SK-N-SH (cell line): ENCODE measurements at regions of chr1 and their contacts with region 1.

Region 1: DNA sequence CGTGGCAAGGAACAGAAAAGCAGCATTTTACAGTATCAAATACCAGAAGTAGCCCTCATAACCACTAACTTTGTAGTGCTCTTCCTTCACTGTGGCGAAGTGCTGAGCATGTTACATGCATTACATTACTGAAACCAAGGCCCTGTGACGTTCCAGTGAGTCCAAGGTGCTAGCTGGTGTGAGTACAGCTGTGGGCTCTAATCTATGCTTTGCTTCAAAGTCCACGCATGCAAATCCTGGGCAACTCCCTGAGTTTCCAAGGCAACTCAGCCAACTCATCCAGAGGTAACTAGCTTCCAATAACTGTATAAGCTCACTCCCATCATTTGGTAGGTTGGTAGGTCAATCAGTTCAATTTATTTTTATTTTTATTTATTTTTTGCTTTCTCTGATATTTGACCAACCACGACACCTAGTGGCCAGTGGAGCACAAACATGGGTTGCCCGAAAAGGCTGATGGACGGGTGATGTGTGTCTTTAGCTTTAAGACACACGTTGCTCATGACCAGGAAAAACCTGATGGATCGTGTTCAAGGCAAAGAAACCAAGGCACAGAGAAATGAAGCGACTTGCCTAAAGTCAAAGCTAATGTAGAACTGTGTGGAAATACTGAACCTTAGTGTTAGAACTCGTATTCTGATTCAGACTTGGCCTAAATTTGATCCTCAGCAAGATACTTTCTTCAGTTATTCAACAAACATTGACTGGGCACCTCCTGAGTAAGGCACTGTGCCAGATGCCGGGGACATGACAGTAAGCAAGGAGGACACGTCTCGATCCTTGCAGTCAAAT is 73.0 kb downstream of the GNG12 start:
- DNase-seq: peak; percentile 56
- H3K4me3 ChIP-seq: peak overlapping the region in 1 of 2 experiments; percentile 4; a peak in 1 of 4 replicates
- H3K27ac ChIP-seq: peak overlapping the region; percentile 51 to 74; a peak in 3 of 4 replicates
- H3K4me1 ChIP-seq: peaks cover 5 to 10% of the 10 kb centered on the region in 2 experiments; a peak in 3 of 4 replicates
- H3K27me3 ChIP-seq: no peaks in the 10 kb centered on the region
- CTCF ChIP-seq: peak; percentile 94
- EP300 ChIP-seq: no peak
- RAD21 ChIP-seq: peak; percentile 87

Region 2: DNA sequence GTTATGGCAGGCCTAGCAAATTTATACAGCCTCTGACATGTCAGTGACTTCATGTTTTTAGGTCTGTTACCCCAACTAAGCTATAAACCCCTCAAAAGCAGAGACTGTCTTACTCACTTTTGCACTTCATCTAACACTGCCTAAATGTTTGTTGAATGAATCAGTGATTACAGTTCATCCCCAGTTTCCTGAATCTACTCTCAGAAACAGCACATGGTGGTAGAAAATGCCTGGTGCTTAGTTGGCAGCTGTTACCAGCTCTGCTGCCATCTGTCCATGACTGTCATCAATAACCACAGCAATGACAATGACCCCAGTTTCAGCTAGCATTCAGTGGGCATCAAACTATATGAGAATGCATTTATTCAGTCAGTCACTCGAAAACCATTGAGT is 219.5 kb before region 1 on chr1:
- CTCF ChIA-PET with region 1: interaction called, 284 read pairs
- POLR2A ChIA-PET with region 1: no interaction called
- DNase-seq: no peak
- H3K4me3 ChIP-seq: no peak overlapping the region
- H3K27ac ChIP-seq: no peak overlapping the region
- H3K4me1 ChIP-seq: no peaks in the 10 kb centered on the region; a peak in 1 of 4 replicates
- H3K27me3 ChIP-seq: no peaks in the 10 kb centered on the region
- CTCF ChIP-seq: no peak
- EP300 ChIP-seq: no peak
- RAD21 ChIP-seq: no peak

Region 3: DNA sequence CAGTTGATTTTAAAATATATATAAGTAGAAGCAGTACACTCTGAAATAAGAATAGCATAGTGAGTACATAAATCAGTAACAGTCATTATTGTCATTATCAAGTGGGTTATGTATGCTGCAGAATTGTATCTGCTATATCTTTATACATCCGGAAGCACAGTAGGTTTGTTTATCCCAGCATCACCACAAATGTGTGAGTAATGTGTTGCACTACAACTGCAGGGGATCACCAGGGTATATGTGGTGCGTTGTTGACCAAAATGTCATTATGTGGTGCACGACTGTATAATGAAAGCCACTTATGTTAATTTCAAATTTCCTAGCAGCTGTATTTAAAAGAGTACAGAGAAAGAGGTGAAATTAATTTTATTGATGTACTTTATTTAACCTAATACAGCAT is 162.9 kb before region 1 on chr1:
- CTCF ChIA-PET with region 1: no interaction called
- POLR2A ChIA-PET with region 1: no interaction called
- DNase-seq: no peak
- H3K4me3 ChIP-seq: no peak overlapping the region
- H3K27ac ChIP-seq: no peak overlapping the region
- H3K4me1 ChIP-seq: peaks cover 0 to 2% of the 10 kb centered on the region in 2 experiments; a peak in 1 of 4 replicates
- H3K27me3 ChIP-seq: no peaks in the 10 kb centered on the region
- CTCF ChIP-seq: no peak
- EP300 ChIP-seq: no peak
- RAD21 ChIP-seq: no peak

Region 4: DNA sequence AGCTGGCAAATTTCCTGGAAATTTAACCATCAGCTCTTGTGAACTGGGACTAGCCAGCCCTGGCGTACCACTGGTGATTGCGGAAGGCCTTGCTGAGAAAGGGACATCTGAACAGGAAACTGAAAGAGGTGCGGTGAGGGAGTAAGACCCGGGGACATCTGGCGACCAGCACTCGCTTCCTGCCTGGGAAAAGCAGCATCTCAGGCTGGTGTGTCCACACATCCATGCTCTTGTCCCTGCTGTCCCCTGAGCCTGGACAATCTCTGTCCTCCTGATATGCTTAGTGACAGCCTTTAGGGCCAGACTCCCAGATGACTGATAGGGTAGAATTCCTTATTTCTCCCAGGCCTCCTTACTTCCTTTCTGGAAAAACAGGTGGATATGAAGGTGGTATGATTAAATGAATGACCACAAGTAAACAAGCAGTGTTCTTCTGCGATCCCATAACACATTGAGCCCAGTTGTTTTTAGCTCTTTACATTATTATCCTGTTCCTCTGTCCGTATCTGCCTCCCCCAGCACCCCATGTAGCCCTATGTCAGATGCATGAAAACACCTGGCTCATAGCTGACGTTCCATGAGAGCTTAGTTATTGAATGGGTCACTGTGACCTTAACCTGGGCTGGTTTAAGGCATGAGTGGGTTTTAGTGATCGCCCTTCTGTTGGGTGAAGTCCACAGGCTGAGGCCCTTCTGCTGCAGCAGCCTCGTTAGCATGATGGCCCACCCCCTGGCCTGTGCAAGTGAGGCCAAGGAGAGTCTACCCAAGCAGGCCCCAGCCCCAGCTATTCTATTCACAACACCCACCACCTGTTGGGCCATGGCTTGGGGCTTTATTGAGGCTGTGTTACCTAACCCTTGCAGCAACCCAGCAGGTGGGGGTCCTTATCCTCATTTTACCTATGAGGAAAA is 151.3 kb before region 1 on chr1:
- CTCF ChIA-PET with region 1: interaction called, 10 read pairs
- POLR2A ChIA-PET with region 1: no interaction called
- DNase-seq: peak; percentile 78
- H3K4me3 ChIP-seq: no peak overlapping the region
- H3K27ac ChIP-seq: peak overlapping the region in 1 of 2 experiments; percentile 95; a peak in 2 of 4 replicates
- H3K4me1 ChIP-seq: peaks cover 0 to 50% of the 10 kb centered on the region in 2 experiments; a peak in 2 of 4 replicates
- H3K27me3 ChIP-seq: no peaks in the 10 kb centered on the region
- CTCF ChIP-seq: no peak
- EP300 ChIP-seq: peak in 1 of 2 experiments; percentile 87; a peak in 1 of 4 replicates
- RAD21 ChIP-seq: no peak

Region 5: GRCh38 chr1:67685067-67685557 is 75.1 kb before region 1 on chr1 and contains the start of gene GADD45A:
- CTCF ChIA-PET with region 1: interaction called, 100 read pairs
- POLR2A ChIA-PET with region 1: interaction called, 8 read pairs
- DNase-seq: peak; percentile 95
- H3K4me3 ChIP-seq: peak within 1 kb of the TSS; percentile 87 to 98
- H3K27ac ChIP-seq: peak within 1 kb of the TSS; percentile 96 to 99
- H3K4me1 ChIP-seq: peaks cover 15 to 28% of the 10 kb centered on the region in 2 experiments; a peak in 3 of 4 replicates
- H3K27me3 ChIP-seq: no peaks in the 10 kb centered on the region
- CTCF ChIP-seq: no peak
- EP300 ChIP-seq: no peak; a peak in 1 of 4 replicates
- RAD21 ChIP-seq: no peak
- polyA plus RNA-seq, gene GADD45A: 106 and 164 TPM in 2 replicates

Region 6: GRCh38 chr1:67732750-67733151 is 27.5 kb before region 1 on chr1:
- CTCF ChIA-PET with region 1: interaction called, 18 read pairs
- POLR2A ChIA-PET with region 1: no interaction called
- DNase-seq: no peak
- H3K4me3 ChIP-seq: no peak overlapping the region
- H3K27ac ChIP-seq: peak overlapping the region in 1 of 2 experiments; percentile 59; a peak in 2 of 4 replicates
- H3K4me1 ChIP-seq: peaks cover 15 to 41% of the 10 kb centered on the region in 2 experiments; a peak in 3 of 4 replicates
- H3K27me3 ChIP-seq: no peaks in the 10 kb centered on the region
- CTCF ChIP-seq: no peak
- EP300 ChIP-seq: no peak
- RAD21 ChIP-seq: no peak

Region 7: DNA sequence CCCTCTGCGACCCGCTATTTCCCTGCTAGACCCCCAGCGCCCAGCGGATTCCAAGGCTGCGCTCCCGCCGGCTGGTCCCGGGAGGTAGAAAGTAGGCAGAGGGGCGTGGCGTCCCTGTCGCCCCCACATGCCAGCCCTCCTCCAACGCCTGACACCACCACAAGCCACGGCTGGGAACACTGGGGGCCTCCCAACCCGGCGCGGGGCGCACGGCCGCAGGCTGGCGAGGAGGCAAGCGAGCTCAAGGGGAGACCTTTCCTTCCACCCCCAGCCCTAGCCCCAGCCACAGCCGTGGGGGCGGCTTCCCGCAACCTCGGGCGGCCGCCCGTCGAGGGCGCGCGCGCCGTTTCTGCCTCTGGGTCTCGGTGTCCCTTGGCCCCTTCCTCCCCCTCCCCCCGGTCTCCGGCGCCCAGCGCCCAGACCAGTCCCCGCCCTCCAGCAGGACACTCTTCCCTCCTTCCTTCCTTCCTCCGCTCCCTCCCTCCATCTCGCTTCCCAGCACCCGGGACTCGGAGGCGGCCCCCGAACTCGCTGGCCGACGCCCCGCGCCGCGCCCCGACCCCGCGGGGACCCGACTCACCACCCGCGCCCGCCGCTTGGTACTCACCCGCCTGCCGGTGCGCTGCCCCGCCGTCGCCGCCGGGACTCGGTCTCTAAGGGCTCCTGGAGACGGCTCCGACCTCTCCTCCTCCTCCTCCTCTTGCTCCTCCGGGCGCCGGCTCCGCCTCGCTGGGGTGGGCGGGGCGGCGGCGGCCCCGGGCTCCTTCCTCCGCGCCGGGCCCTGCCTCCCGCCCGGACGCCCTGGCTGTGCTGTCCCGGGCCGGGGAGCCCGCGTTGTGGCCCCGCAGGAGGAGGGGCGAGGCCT is 72.7 kb after region 1 on chr1 and contains the start of gene GNG12:
- CTCF ChIA-PET with region 1: interaction called, 36 read pairs
- POLR2A ChIA-PET with region 1: no interaction called
- DNase-seq: peak; percentile 90
- H3K4me3 ChIP-seq: peak within 1 kb of the TSS; percentile 77 to 91
- H3K27ac ChIP-seq: peak within 1 kb of the TSS; percentile 84 to 87
- H3K4me1 ChIP-seq: peaks cover 0 to 27% of the 10 kb centered on the region in 2 experiments; a peak in 3 of 4 replicates
- H3K27me3 ChIP-seq: no peaks in the 10 kb centered on the region
- CTCF ChIP-seq: no peak
- EP300 ChIP-seq: no peak
- RAD21 ChIP-seq: no peak
- polyA plus RNA-seq, gene GNG12: 41.2 and 56.1 TPM in 2 replicates